ENCODE measurements at regions of chr18 and their contacts with region 1.

Region 1: GRCh38 chr18:10851824-10852319 is 297.5 kb downstream of the PIEZO2 start:
- DNase-seq: no peak
- ATAC-seq: peak; percentile 77 to 94 (median 86)
- H3K4me3 ChIP-seq: no peak overlapping the region
- H3K27ac ChIP-seq: no peak overlapping the region
- H3K4me1 ChIP-seq: no peaks in the 10 kb centered on the region
- H3K27me3 ChIP-seq: no peaks in the 10 kb centered on the region
- CTCF ChIP-seq: peak; percentile 71 to 83 (median 80)
- POLR2A ChIP-seq: no peak

Region 2: DNA sequence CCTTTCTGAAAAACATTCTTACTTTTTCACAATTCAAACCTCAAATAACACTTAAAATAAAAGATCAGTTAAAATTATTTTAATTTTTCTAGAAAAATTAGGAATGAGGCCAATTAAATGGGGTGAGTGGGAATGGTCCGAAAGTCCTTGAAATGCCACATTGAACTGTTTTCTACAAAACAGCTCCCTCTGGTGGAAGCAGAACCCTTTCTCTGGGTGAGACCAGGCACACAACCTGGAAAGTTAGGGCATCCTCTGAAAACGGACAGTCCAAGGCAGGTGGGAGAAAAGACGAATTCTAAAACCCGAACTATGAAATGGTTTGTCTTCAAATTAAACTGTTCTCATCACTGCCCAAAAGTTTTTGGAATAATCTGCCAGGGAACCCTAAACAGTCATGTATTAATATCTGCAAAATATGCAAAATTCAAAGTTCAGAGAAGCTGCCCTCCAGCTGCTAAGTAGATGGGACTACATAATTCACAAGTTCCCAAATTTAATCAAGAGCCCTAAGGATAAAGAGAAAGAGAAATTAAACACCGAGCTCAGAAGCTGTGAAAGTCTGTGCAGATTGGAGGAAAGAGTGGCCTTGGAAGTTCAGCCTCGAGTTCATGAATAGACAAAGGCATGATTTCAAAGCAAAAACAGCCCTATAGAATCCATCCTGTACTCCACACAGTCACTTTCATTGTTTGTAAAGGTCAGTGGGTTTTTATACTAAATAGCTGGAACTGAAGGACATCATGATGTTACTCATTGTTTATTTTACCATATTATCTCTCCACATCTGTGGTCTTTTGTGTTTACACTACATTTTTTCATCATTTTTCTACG is 189.2 kb after region 1 on chr18:
- intact Hi-C with region 1: loop called in 1 of 2 experiments (anchors 10 kb)
- DNase-seq: peak in 1 of 3 donors; percentile 73
- ATAC-seq: peak; percentile 88 to 91 (median 89)
- H3K4me3 ChIP-seq: no peak overlapping the region
- H3K27ac ChIP-seq: no peak overlapping the region
- H3K4me1 ChIP-seq: peaks cover 0 to 7% (median 2%) of the 10 kb centered on the region in 4 donors
- H3K27me3 ChIP-seq: no peaks in the 10 kb centered on the region
- CTCF ChIP-seq: peak; percentile 72 to 83 (median 77)
- POLR2A ChIP-seq: no peak

Region 3: GRCh38 chr18:11149441-11150270 is 297.8 kb after region 1 on chr18 and contains the start of gene PIEZO2:
- intact Hi-C with region 1: loop called in 1 of 2 experiments (anchors 10 kb)
- DNase-seq: peak; percentile 88 to 91 (median 89)
- ATAC-seq: peak; percentile 83 to 91 (median 86)
- H3K4me3 ChIP-seq: peak within 1 kb of the TSS; percentile 54 to 75 (median 73)
- H3K27ac ChIP-seq: peak within 1 kb of the TSS in 2 of 3 donors; percentile 20 to 44
- H3K4me1 ChIP-seq: peaks cover 0 to 33% (median 3%) of the 10 kb centered on the region in 4 donors
- H3K27me3 ChIP-seq: no peaks in the 10 kb centered on the region
- CTCF ChIP-seq: peak in 1 of 4 donors; percentile 11
- POLR2A ChIP-seq: peak; percentile 78
- total RNA-seq, gene PIEZO2: 6.6 to 16.9 (median 10.1) TPM

Measured in right lobe of liver (tissue), 6 donors.